Endothelial cell of umbilical vein (primary cell): ENCODE measurements at regions of chr15 and their contacts with region 1.

Region 1: DNA sequence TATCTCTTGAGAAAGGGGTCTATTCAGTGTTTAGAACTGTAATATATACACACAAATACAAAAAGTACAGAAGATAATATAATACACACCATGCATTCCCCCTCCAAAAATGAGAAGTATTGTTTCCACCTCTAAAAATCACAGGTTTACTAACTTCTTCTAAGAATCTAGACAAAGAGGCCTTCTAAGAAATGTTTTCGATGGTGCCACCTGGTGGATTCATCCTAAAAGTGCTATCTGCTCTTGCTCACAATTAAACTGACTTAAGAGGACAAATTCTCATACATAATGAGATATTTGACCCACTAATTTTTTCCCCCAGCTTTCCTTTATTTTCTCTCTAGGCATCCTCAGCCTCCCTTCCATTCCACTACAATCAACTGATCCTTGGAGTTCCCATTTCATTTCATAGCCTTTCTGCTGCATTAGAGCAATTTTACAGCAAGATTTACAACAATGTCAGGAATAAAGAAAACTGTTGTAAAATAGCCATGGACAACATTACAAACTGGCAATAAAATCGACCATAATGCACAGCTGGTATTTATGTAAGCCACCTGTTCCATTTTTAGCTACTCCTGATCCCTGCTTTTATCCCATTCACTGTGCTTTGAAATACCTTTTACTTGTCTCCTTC is 124.6 kb downstream of the ARRDC4 start:
- DNase-seq: peak; percentile 73
- H3K4me3 ChIP-seq: no peak overlapping the region
- H3K27ac ChIP-seq: no peak overlapping the region
- H3K4me1 ChIP-seq: no peaks in the 10 kb centered on the region
- H3K27me3 ChIP-seq: no peaks in the 10 kb centered on the region
- CTCF ChIP-seq: peak; percentile 35 to 42
- POLR2A ChIP-seq: no peak

Region 2: GRCh38 chr15:97903971-97904572 is 181.0 kb before region 1 on chr15:
- CTCF ChIA-PET with region 1: no interaction called
- POLR2A ChIA-PET with region 1: no interaction called
- dilution Hi-C with region 1: no loop called
- intact Hi-C with region 1: loop called (anchors 1 kb)
- DNase-seq: peak; percentile 39
- H3K4me3 ChIP-seq: no peak overlapping the region
- H3K27ac ChIP-seq: no peak overlapping the region
- H3K4me1 ChIP-seq: no peaks in the 10 kb centered on the region
- H3K27me3 ChIP-seq: peaks cover 0 to 4% of the 10 kb centered on the region in 2 experiments
- CTCF ChIP-seq: peak; percentile 55 to 80
- POLR2A ChIP-seq: no peak

Region 3: GRCh38 chr15:97909291-97909891 is 175.7 kb before region 1 on chr15:
- CTCF ChIA-PET with region 1: no interaction called
- POLR2A ChIA-PET with region 1: no interaction called
- dilution Hi-C with region 1: no loop called
- intact Hi-C with region 1: loop called (anchors 1 kb)
- DNase-seq: peak; percentile 63
- H3K4me3 ChIP-seq: no peak overlapping the region
- H3K27ac ChIP-seq: no peak overlapping the region
- H3K4me1 ChIP-seq: no peaks in the 10 kb centered on the region
- H3K27me3 ChIP-seq: peaks cover 0 to 4% of the 10 kb centered on the region in 2 experiments
- CTCF ChIP-seq: peak; percentile 87 to 90
- POLR2A ChIP-seq: no peak

Region 4: DNA sequence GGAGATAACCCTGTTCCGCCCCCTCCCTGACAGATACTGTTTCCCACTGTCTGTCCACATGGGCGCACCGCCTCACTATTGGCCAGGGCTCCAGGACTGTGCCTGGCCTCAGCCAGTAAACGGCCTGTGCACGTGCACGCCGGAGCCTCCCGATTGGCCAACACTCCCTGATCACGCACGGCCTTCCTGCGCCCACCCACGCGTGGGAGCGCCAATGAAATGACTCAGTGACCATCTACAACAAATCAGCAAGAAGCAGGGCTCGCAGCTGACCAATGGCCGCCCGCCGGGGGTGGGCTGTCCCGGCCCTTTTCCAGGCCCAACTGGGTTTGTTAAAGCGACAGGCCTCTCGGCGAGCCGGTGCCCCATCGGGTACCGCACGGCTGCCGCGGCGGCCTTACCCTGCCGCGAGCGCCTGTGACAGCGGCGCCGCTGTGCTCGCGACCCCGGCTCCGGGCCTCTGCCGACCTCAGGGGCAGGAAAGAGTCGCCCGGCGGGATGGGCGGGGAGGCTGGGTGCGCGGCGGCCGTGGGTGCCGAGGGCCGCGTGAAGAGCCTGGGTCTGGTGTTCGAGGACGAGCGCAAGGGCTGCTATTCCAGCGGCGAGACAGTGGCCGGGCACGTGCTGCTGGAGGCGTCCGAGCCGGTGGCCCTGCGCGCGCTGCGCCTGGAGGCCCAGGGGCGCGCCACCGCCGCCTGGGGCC is 124.6 kb before region 1 on chr15 and contains the start of gene ARRDC4:
- CTCF ChIA-PET with region 1: no interaction called
- POLR2A ChIA-PET with region 1: no interaction called
- dilution Hi-C with region 1: no loop called
- intact Hi-C with region 1: loop called (anchors 1 kb)
- DNase-seq: peak; percentile 100
- H3K4me3 ChIP-seq: peak within 1 kb of the TSS; percentile 48 to 61 (median 58)
- H3K27ac ChIP-seq: no peak within 1 kb of the TSS
- H3K4me1 ChIP-seq: peaks cover 10% of the 10 kb centered on the region
- H3K27me3 ChIP-seq: no peaks in the 10 kb centered on the region
- CTCF ChIP-seq: no peak
- POLR2A ChIP-seq: no peak
- total RNA-seq, gene ARRDC4: 0.97 and 2.5 TPM in 2 replicates

Region 5: DNA sequence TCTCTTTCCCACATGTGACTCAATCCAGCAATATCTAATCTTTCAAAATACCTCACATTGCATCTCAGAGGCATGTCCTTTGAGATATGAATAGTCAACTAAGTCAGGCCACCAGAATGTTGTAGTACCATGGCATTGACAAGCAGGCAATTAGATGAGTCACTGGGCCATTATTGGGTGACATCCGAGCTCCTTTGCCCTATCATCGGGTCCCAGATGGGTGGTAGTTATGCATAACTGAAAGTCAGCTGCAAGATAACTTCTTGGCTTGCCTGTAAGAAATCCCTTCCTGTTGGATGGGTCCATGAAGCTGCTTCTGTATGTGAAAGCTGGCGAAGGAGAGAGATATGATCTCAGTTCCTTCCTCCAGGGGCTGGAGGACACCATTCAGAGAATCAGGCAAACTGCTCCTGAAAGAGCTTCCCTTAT is 91.8 kb before region 1 on chr15:
- CTCF ChIA-PET with region 1: no interaction called
- POLR2A ChIA-PET with region 1: no interaction called
- dilution Hi-C with region 1: no loop called
- intact Hi-C with region 1: loop called (anchors 1 kb)
- DNase-seq: peak; percentile 58
- H3K4me3 ChIP-seq: no peak overlapping the region
- H3K27ac ChIP-seq: peak overlapping the region; percentile 42
- H3K4me1 ChIP-seq: peaks cover 13% of the 10 kb centered on the region
- H3K27me3 ChIP-seq: peaks cover 0 to 2% of the 10 kb centered on the region in 2 experiments
- CTCF ChIP-seq: no peak
- POLR2A ChIP-seq: no peak

Region 6: GRCh38 chr15:98177924-98178592 is 92.9 kb after region 1 on chr15:
- CTCF ChIA-PET with region 1: no interaction called
- POLR2A ChIA-PET with region 1: no interaction called
- dilution Hi-C with region 1: no loop called
- intact Hi-C with region 1: loop called (anchors 2 kb)
- DNase-seq: peak; percentile 53
- H3K4me3 ChIP-seq: no peak overlapping the region
- H3K27ac ChIP-seq: no peak overlapping the region
- H3K4me1 ChIP-seq: no peaks in the 10 kb centered on the region
- H3K27me3 ChIP-seq: no peaks in the 10 kb centered on the region
- CTCF ChIP-seq: peak; percentile 32 to 39
- POLR2A ChIP-seq: no peak

Region 7: DNA sequence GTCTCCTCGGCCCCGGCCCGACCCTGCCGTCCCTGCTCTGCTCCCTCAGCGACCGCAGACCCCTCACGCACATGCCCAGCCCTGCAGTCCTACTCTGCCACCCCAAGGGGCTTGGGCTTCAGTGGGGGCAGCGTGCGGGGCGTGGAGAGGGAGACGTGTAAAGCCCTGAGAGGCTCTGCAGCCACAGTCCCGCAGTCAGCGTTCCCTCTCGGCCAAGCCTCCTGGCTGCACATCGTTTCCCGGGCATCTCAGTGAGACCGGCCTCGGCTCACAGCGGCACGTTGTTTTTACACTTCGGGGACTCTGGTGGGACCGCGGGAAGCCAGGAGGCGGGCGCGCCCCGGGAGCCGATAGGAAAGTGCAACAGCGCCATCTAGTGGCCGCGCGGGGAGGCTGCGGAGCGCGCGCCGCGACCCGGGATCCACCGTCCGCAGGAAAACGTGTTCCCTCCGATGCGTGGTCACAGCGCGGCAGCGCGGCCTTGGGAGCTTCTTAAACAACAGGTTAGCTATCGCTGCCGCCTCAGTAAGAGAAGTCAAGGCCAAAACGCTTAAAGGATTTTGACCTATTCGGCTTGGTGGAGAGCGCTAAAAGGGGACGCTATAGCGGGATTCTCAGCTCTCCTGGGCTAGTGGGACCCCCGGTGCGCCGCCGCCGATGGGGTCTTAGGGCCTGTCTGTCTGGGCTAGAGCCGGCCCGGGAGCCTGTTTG is 336.5 kb after region 1 on chr15:
- CTCF ChIA-PET with region 1: no interaction called
- POLR2A ChIA-PET with region 1: no interaction called
- dilution Hi-C with region 1: no loop called
- intact Hi-C with region 1: loop called (anchors 1 kb)
- DNase-seq: peak; percentile 36
- H3K4me3 ChIP-seq: no peak overlapping the region
- H3K27ac ChIP-seq: no peak overlapping the region
- H3K4me1 ChIP-seq: no peaks in the 10 kb centered on the region
- H3K27me3 ChIP-seq: peaks cover 6 to 18% of the 10 kb centered on the region in 2 experiments
- CTCF ChIP-seq: peak; percentile 97 to 99
- POLR2A ChIP-seq: no peak